Sigmoid colon (tissue), 7 donors: ENCODE measurements at regions of chr1 and their contacts with region 1.

Region 1: GRCh38 chr1:958823-959729 is at the start of gene NOC2L:
- DNase-seq: peak; percentile 95
- H3K4me3 ChIP-seq: peak within 1 kb of the TSS; percentile 70 to 100 (median 86)
- H3K27ac ChIP-seq: peak within 1 kb of the TSS; percentile 38 to 69 (median 66)
- H3K4me1 ChIP-seq: peaks cover 0 to 48% (median 38%) of the 10 kb centered on the region in 4 donors
- H3K27me3 ChIP-seq: no peaks in the 10 kb centered on the region
- CTCF ChIP-seq: no peak
- EP300 ChIP-seq: no peak
- POLR2A ChIP-seq: peak in 1 of 2 donors; percentile 51
- total RNA-seq, gene NOC2L: 26.0 to 32.6 (median 27.8) TPM

Region 2: DNA sequence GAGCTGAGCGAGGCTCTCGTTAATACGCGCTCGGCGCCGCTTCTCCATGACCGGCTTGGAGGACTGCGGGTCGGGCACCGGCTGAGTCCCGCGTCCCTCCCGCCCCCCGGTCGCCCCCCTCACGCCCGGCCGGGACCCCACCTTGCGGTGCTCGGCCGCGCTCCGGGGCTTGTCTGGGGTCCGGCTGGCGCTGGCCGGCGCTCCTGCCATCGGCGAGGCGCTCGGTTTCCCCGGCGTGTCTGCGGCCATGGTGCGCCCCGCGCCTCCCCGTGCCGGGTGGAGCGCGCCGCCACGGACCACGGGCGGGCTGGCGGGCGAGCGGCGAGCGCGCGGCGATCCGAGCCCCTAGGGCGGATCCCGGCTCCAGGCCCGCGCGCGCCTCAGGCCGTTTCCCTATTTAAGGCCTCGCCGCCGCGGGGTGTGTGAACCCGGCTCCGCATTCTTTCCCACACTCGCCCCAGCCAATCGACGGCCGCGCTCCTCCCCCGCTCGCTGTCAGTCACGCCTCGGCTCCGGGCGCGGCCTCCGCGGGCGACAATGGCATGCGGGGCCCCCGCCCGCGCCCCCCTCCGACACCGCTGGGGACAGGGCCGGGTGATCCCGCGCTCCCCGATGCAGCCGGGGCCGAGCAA is 40.8 kb after region 1 on chr1 and contains the start of gene HES4:
- intact Hi-C with region 1: loop called (anchors 1 kb)
- DNase-seq: peak; percentile 97
- H3K4me3 ChIP-seq: peak within 1 kb of the TSS; percentile 58 to 92 (median 60)
- H3K27ac ChIP-seq: peak within 1 kb of the TSS; percentile 89 to 98 (median 96)
- H3K4me1 ChIP-seq: peaks cover 0 to 45% (median 35%) of the 10 kb centered on the region in 4 donors
- H3K27me3 ChIP-seq: peaks cover 0 to 17% (median 5%) of the 10 kb centered on the region in 3 donors
- CTCF ChIP-seq: no peak
- EP300 ChIP-seq: peak in 2 of 4 donors; percentile 25 to 63
- POLR2A ChIP-seq: no peak
- total RNA-seq, gene HES4: 25.0 to 65.1 (median 27.9) TPM